RWPE1 (cell line): ENCODE measurements at regions of chr1 and their contacts with region 1.

Region 1: GRCh38 chr1:198922638-198923430 is 284.0 kb downstream of the PTPRC start:
- DNase-seq: no peak
- H3K27ac ChIP-seq: no peak overlapping the region
- CTCF ChIP-seq: no peak

Region 2: DNA sequence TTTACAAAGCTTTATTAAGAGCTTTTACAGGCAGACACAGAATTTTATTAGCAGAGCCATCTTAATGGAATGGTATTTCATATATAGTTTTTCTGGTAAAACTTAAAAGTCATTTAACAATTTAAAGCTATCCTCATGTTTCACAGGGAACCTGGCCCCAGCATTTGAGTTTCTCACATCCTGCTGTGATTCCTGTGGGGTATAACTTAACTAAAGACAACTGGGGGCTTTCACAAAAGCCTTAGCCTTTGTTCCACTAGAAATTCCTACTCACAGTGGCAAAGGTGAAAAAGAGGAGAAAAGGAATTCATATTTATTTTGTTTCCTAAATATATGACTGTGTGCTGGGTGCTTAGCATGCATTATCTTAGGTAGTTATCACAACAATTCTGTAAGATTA is 1381.4 kb before region 1 on chr1:
- CTCF ChIA-PET with region 1: interaction called, 13 read pairs
- POLR2A ChIA-PET with region 1: no interaction called
- DNase-seq: no peak
- H3K27ac ChIP-seq: no peak overlapping the region
- CTCF ChIP-seq: no peak

Region 3: GRCh38 chr1:198909973-198910372 is 12.9 kb before region 1 on chr1:
- CTCF ChIA-PET with region 1: no interaction called
- POLR2A ChIA-PET with region 1: no interaction called
- DNase-seq: no peak
- H3K27ac ChIP-seq: no peak overlapping the region
- CTCF ChIP-seq: no peak

Region 4: DNA sequence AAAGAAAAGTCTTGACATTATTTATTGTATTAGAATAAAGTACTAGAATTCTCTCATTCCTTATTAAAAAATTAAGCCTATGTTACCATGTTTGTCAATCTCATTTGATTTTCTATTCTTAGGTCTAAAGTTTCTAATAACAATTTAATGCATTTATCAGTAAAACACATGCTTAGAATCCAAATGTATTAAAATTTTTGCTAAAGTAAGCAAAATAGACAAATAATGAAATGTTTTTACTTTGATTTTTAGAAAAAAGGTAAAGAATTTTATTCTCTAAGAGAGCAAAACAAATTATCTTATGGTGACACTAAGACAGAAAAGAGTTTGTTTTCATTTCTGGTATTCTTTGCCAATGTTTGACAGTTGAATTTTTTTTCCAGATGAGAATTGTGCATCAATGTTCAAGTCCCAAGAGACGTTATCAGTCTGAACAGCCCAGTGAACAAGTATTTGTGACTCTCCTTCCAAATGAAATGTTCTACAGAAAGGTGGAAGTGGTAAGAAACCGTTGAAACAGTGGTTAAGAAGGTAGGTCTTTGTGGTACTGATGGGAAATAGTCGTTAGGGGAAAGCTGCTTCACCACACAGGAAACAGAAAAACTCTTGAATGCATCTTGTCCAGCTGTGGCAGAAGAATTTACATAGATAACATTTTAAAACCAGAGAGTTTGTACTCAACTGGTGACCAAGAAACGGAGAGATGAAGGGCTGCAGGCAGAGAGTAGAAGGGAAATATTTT is 118.5 kb after region 1 on chr1:
- CTCF ChIA-PET with region 1: no interaction called
- POLR2A ChIA-PET with region 1: no interaction called
- DNase-seq: no peak
- H3K27ac ChIP-seq: no peak overlapping the region
- CTCF ChIP-seq: no peak

Region 5: DNA sequence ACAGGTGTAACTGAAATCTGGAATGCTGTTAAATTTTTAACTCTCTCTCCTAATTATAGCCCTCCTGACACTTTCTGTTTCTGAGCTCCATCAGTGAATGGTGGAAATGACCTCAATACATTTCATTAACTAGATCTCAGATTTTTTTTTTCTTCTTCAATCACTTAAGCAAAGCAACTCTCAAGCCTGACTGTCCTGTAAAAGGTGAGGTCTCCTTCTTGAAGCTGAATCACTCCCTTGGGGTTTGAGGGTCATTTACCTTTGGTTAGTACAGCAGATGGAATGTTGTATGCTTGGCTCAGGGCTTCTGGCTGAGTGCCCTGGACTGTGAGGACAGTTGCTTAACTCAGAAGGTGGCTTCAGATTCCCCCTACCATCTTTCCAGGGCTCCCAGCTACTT is 234.7 kb after region 1 on chr1:
- CTCF ChIA-PET with region 1: no interaction called
- POLR2A ChIA-PET with region 1: no interaction called
- DNase-seq: peak; percentile 36
- H3K27ac ChIP-seq: no peak overlapping the region
- CTCF ChIP-seq: no peak

Region 6: DNA sequence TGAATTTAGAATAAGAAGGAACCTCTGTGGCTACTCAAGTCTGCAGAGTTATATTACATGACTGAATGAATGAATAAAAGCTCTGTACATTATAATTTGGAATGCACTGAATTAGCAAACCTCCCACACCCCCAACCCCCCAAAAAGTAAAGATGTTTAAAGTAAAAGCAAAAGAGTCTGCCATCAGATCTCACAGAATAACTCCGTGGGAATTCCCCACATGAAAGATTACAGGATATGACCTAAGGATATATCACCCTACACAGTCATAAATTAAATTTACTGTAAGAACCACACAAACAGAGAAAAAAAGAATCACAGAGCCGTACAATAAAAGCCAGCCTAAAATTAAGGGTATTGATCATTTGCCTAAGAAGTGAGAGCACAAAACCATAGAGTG is 303.3 kb after region 1 on chr1:
- CTCF ChIA-PET with region 1: no interaction called
- POLR2A ChIA-PET with region 1: no interaction called
- DNase-seq: peak; percentile 48
- H3K27ac ChIP-seq: no peak overlapping the region
- CTCF ChIP-seq: no peak